Panc1 (cell line): ENCODE measurements at regions of chr6 and their contacts with region 1.

Region 1: DNA sequence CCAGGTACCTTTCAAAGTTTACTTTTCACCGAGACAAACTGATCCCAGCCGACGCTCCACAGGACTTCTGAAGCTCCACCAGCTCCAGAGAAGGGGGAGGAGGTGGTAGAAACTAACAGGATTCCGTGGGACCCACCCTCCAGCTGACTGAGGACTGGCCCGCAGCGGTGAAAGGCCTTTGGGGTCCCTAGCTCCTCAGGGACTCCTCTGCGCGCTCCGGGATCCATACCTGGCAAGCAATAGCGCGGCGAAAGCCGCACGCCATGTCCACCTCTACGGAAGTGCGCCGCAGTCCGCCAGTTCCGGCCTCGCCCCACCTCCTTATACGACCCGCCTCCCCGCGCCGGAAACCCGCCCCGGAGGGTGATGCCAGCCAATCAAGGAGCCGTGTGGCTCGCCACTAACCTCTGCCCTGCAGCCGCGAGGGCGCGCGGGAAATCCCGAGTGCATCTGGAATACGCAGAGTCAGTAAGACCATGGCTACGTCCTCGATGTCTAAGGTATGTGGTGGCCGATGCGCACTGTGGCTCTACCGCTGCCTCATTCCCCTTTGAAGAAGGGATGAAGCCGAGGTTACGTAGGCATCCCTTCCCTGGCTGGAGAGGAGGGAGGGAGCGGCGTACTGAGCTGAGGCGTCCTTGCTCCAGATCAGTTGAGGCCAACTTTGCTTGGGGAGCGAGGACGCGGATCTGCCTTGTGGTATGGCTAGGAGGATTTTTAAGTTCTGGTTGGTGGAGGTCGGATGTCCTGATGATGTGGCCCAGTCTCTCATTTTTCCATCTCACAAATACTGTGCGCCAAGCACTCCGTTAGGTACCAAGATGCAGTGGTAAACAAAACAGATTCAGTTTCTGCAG is at the starts of genes ORC3 and RARS2:
- DNase-seq: peak; percentile 72
- ATAC-seq: peak; percentile 100
- H3K4me3 ChIP-seq: peak within 1 kb of the TSS; percentile 95 to 100
- H3K27ac ChIP-seq: peak within 1 kb of the TSS; percentile 98
- H3K4me1 ChIP-seq: peaks cover 4% of the 10 kb centered on the region; the same call in 1 of the 2 replicates
- H3K27me3 ChIP-seq: no peaks in the 10 kb centered on the region
- CTCF ChIP-seq: no peak
- total RNA-seq, gene ORC3: 36.9 TPM
- total RNA-seq, gene RARS2: 38.3 TPM

Region 2: DNA sequence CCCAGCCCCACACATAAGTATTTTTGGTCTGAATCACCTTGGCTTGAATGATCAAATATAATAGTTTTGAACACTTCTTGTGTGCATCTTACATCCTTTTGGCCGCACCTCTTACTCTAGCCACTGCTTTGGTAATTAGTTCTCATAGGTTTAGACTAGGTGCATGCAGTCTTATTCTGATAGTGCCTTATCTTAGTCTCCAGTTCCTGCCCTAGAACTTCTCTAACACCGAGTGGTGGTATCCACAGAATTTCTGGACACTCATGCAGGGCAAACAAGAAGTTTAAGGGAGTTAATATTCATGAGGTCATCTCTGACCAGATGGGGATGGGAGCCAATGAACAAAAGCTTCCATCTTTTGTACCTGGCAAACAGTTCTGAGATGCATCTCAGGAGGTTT is 189.6 kb after region 1 on chr6:
- CTCF ChIA-PET with region 1: no interaction called
- POLR2A ChIA-PET with region 1: interaction called, 12 read pairs
- in situ Hi-C with region 1: no loop called
- intact Hi-C with region 1: no loop called
- DNase-seq: no peak
- ATAC-seq: no peak
- H3K4me3 ChIP-seq: no peak overlapping the region
- H3K27ac ChIP-seq: no peak overlapping the region
- H3K4me1 ChIP-seq: no peaks in the 10 kb centered on the region
- H3K27me3 ChIP-seq: no peaks in the 10 kb centered on the region
- CTCF ChIP-seq: no peak